ENCODE measurements at regions of chr17 and their contacts with region 1.

Region 1: DNA sequence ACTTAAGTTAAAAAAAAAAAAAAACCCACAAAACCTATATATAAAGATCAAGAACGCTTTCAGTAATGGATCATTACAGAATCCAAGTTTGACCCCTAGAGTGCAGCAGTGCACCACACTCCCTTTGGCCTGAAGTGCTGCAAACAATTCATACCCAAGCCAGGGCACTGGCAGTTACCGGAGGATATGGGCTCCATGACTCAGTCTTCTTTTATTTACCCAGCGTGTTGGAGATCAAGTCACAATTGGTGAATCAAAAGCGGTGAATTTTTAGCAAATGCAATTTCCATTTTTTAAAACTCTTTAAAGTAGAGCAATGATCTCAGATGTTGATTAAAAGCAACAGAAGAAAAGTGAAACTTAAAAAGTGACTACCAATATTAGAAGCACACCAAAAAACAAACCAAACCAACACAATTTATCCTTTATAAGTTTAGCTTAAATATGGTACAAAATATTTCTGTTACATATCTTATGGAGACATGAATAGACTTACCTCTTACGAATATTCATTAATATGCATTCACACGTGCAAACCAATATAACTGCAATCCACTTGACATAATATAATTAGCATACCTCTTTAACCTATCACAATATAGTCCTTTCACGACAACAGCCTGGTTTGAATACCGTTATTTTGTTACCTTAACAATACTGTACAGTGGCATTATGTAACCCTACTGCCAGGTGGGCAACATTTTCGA is 46.3 kb downstream of the ZNF652 start:
- DNase-seq: peak; percentile 64
- H3K4me3 Mint-ChIP-seq: no peak overlapping the region
- H3K27ac Mint-ChIP-seq: no peak overlapping the region
- H3K4me1 Mint-ChIP-seq: peaks cover 18% of the 10 kb centered on the region
- H3K27me3 Mint-ChIP-seq: peaks cover 1% of the 10 kb centered on the region

Region 2: GRCh38 chr17:49162866-49163265 is 152.8 kb before region 1 on chr17:
- intact Hi-C with region 1: no loop called
- DNase-seq: no peak
- H3K4me3 Mint-ChIP-seq: no peak overlapping the region
- H3K27ac Mint-ChIP-seq: no peak overlapping the region
- H3K4me1 Mint-ChIP-seq: no peaks in the 10 kb centered on the region
- H3K27me3 Mint-ChIP-seq: peaks cover 28% of the 10 kb centered on the region

Region 3: GRCh38 chr17:49337884-49338283 is 22.2 kb after region 1 on chr17:
- intact Hi-C with region 1: no loop called
- DNase-seq: no peak
- H3K4me3 Mint-ChIP-seq: no peak overlapping the region
- H3K27ac Mint-ChIP-seq: peak overlapping the region; percentile 51
- H3K4me1 Mint-ChIP-seq: peaks cover 34% of the 10 kb centered on the region
- H3K27me3 Mint-ChIP-seq: peaks cover 23% of the 10 kb centered on the region

Region 4: DNA sequence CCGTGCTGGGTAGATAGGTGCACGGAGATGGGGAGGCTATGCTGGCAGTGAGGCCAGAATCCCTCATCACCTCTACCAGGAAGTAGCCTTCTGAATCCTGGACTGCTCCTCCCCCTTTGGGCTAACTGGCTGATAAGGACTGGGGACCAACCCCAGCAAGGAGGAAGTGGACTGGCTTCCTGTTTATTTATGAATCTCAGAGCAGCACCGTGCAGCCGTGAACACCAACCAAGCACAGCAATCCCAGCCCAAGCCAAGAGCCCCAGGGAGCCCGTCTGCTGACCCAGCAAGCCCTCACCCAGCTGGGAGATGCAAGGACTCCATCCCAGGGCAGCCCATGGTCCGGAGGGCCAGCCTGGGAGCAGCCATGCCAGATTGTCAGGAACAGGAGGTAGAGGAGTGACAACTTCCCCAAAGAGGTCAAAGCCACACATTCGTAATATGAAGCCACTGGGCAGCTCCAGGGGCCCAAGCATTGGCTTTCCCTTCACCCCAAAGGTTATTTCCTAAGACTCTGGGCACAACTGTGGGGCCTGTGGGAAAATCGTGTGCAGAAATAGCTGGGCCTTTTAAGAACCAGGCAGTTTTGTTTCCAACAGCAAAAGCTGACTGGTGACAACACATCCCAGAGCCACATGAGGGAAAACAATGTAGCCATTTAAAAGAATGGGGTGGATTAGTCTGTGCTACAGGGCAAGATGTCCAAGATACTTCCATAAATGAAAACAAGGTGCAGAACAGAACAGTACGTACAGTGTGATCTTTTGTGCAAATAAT is 75.0 kb after region 1 on chr17:
- intact Hi-C with region 1: loop called (anchors 1 kb)
- DNase-seq: no peak
- H3K4me3 Mint-ChIP-seq: no peak overlapping the region
- H3K27ac Mint-ChIP-seq: peak overlapping the region; percentile 53
- H3K4me1 Mint-ChIP-seq: peaks cover 44% of the 10 kb centered on the region
- H3K27me3 Mint-ChIP-seq: peaks cover 4% of the 10 kb centered on the region

Measured in activated T-helper 2 cell treated with anti-CD3 and anti-CD28 coated beads, Interferon-gamma antibody, Interleukin-2, Interleukin-4, amounts not matched to agents 10 μg/mL and 5 μg/mL and 100 μg/mL, durations not matched to agents 14 hours and 24 hours and 36 hours (primary cell).